ENCODE measurements at regions of chr1 and their contacts with region 1.

Region 1: DNA sequence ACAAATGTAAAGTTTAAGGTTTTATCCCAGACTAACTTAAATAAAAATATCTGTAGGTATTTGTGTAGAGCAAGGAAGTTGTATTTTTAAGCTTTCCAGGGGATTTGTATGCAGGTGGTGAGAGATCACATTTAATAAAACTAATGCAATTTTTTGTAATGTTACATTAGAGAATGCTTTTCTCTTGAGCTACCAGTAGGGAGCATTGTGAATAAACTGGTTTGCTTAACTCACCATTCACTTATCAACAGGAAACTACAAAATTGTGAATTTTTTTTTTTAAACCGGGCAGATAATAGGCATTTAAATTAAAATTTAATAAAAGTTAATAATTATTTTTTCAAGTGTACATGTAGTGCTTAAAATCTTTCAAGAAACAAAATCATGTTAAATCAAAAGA is 78.6 kb downstream of the IVNS1ABP start:
- DNase-seq: no peak
- H3K4me3 Mint-ChIP-seq: no peak overlapping the region
- H3K27ac Mint-ChIP-seq: no peak overlapping the region
- H3K4me1 Mint-ChIP-seq: no peaks in the 10 kb centered on the region
- H3K27me3 Mint-ChIP-seq: no peaks in the 10 kb centered on the region
- CTCF ChIP-seq: peak; percentile 14

Region 2: DNA sequence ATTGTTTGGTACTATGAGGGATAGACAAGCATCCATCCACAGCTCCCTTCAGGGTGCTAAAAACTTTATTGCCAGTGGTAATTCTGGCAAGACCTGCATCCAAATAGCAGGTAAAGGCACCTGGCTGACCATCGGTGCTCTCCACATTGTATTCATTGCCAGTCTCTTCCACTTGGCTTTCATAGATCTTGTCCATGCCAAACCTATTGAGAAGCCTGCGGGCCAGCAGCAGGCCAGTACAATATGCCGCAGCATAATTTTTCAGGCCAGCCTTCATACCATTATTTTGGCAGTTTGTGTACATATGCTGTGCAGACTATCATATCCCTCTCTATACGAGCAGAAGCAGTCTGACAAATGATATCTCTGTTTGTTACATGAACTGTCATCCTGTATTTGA is 11.3 kb before region 1 on chr1:
- CTCF ChIA-PET with region 1: no interaction called
- intact Hi-C with region 1: no loop called
- DNase-seq: no peak
- H3K4me3 Mint-ChIP-seq: no peak overlapping the region
- H3K27ac Mint-ChIP-seq: no peak overlapping the region
- H3K4me1 Mint-ChIP-seq: no peaks in the 10 kb centered on the region
- H3K27me3 Mint-ChIP-seq: no peaks in the 10 kb centered on the region
- CTCF ChIP-seq: no peak

Region 3: GRCh38 chr1:185517808-185518419 is 279.5 kb after region 1 on chr1:
- CTCF ChIA-PET with region 1: no interaction called
- intact Hi-C with region 1: no loop called
- DNase-seq: no peak
- H3K4me3 Mint-ChIP-seq: no peak overlapping the region
- H3K27ac Mint-ChIP-seq: no peak overlapping the region
- H3K4me1 Mint-ChIP-seq: peaks cover 17% of the 10 kb centered on the region
- H3K27me3 Mint-ChIP-seq: no peaks in the 10 kb centered on the region
- CTCF ChIP-seq: no peak

Region 4: GRCh38 chr1:185670187-185670627 is 431.8 kb after region 1 on chr1:
- CTCF ChIA-PET with region 1: interaction called, 8 read pairs
- intact Hi-C with region 1: loop called (anchors 1 kb)
- DNase-seq: peak; percentile 56
- H3K4me3 Mint-ChIP-seq: no peak overlapping the region
- H3K27ac Mint-ChIP-seq: no peak overlapping the region
- H3K4me1 Mint-ChIP-seq: peaks cover 12% of the 10 kb centered on the region
- H3K27me3 Mint-ChIP-seq: no peaks in the 10 kb centered on the region
- CTCF ChIP-seq: peak; percentile 39

Measured in Calu3 (cell line).